Aorta (tissue), 5 donors: ENCODE measurements at regions of chr12 and their contacts with region 1.

Region 1: GRCh38 chr12:93918262-93918661 is 230.1 kb upstream of the PLXNC1 start:
- DNase-seq: peak in 1 of 2 donors; percentile 52
- ATAC-seq: peak; percentile 87
- H3K4me3 ChIP-seq: no peak overlapping the region
- H3K27ac ChIP-seq: peak overlapping the region; percentile 82 to 99
- H3K4me1 ChIP-seq: peaks cover 3% of the 10 kb centered on the region in 2 donors
- H3K27me3 ChIP-seq: no peaks in the 10 kb centered on the region

Region 2: GRCh38 chr12:93785262-93786010 is 132.8 kb before region 1 on chr12:
- intact Hi-C with region 1: loop called in 1 of 2 experiments (anchors 5 kb)
- DNase-seq: peak in 1 of 2 donors; percentile 68
- ATAC-seq: peak; percentile 90
- H3K4me3 ChIP-seq: no peak overlapping the region
- H3K27ac ChIP-seq: peak overlapping the region; percentile 50 to 84
- H3K4me1 ChIP-seq: peaks cover 0 to 9% of the 10 kb centered on the region in 2 donors
- H3K27me3 ChIP-seq: no peaks in the 10 kb centered on the region

Region 3: GRCh38 chr12:93813972-93814821 is 104.1 kb before region 1 on chr12:
- intact Hi-C with region 1: loop called in 1 of 2 experiments (anchors 2 kb)
- DNase-seq: peak; percentile 79 to 88
- ATAC-seq: peak; percentile 88
- H3K4me3 ChIP-seq: no peak overlapping the region
- H3K27ac ChIP-seq: peak overlapping the region; percentile 96 to 98
- H3K4me1 ChIP-seq: peaks cover 2 to 8% of the 10 kb centered on the region in 2 donors
- H3K27me3 ChIP-seq: no peaks in the 10 kb centered on the region

Region 4: GRCh38 chr12:93894391-93895088 is 23.7 kb before region 1 on chr12:
- intact Hi-C with region 1: loop called in 1 of 2 experiments (anchors 2 kb)
- DNase-seq: peak; percentile 91
- ATAC-seq: peak; percentile 90
- H3K4me3 ChIP-seq: no peak overlapping the region
- H3K27ac ChIP-seq: peak overlapping the region; percentile 38 to 95
- H3K4me1 ChIP-seq: no peaks in the 10 kb centered on the region
- H3K27me3 ChIP-seq: no peaks in the 10 kb centered on the region

Region 5: DNA sequence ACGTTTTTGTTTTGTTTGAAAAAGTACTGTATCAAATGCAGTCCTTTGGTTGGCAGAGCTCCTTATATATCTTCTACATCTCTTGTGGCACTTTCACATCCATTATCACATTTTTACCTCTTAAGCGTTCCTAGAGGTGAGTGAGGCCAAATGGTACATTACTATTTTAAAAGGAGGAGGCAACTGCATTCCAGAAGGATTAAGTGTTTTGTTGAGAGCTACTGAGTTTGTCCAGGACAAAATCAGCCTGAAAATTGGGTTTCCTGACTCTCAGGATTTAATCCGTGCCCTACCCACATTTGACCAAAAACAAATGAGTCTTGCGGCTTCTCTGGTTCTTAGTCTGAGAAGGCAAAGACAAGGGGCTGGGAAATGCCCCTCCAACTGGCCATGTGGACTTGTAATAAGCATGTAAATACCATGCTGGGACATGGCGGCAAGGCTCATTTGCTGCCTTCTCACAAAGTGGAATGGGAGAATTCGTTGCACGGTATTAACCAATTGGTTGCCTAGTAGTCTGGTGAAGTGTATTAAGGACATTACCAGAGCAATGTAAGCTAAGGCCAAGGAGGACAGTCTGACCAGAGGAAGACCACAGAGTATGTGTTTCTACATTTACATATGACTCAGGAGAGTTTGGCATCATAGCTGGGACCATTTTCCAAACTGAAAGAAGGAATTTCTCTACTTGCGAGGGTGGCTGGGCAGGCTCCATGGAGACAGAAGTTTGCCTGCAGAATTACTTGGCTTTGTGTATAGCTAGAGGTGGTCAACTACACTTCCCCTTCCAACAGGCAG is 54.3 kb after region 1 on chr12:
- intact Hi-C with region 1: loop called in 1 of 2 experiments (anchors 5 kb)
- DNase-seq: peak in 1 of 2 donors; percentile 68
- ATAC-seq: peak; percentile 39
- H3K4me3 ChIP-seq: no peak overlapping the region
- H3K27ac ChIP-seq: peak overlapping the region; percentile 73 to 98
- H3K4me1 ChIP-seq: peaks cover 4 to 6% of the 10 kb centered on the region in 2 donors
- H3K27me3 ChIP-seq: no peaks in the 10 kb centered on the region